K562 (cell line): ENCODE measurements at regions of chr22 and their contacts with region 1.

Region 1: GRCh38 chr22:39997939-39998338 is 3.2 kb downstream of the FAM83F start:
- DNase-seq: no peak
- ATAC-seq: no peak
- H3K4me3 ChIP-seq: no peak overlapping the region
- H3K27ac ChIP-seq: no peak overlapping the region
- H3K4me1 ChIP-seq: peaks cover 48 to 61% of the 10 kb centered on the region in 2 experiments
- H3K27me3 ChIP-seq: no peaks in the 10 kb centered on the region
- CTCF ChIP-seq: no peak
- EP300 ChIP-seq: no peak
- POLR2A ChIP-seq: no peak
- RAD21 ChIP-seq: no peak

Region 2: DNA sequence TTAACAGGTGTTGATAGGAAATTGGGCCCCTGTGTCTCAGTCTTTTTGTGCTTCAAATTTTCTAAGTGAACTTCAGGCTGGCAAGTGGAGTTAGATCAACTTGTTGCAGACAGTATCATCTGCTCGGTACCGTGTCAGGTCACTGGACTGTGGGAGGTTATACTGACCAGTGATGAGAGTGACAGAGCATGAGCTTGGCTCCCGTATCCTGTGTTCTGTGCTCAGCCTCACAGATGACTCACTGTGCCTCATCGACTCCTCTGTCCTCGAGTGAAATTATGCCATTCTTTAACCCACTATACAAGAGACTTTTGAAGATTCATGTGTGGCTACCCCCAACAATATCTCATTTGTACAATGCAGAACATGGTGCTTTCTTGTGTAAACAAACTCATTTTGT is 89.2 kb before region 1 on chr22:
- CTCF ChIA-PET with region 1: no interaction called
- POLR2A ChIA-PET with region 1: no interaction called
- in situ Hi-C with region 1: no loop called
- intact Hi-C with region 1: no loop called
- DNase-seq: peak; percentile 22 to 73 (median 31)
- ATAC-seq: peak; percentile 81
- H3K4me3 ChIP-seq: no peak overlapping the region
- H3K27ac ChIP-seq: peak overlapping the region; percentile 46; the same call in 1 of the 3 replicates
- H3K4me1 ChIP-seq: peaks cover 0 to 18% of the 10 kb centered on the region in 2 experiments
- H3K27me3 ChIP-seq: no peaks in the 10 kb centered on the region
- CTCF ChIP-seq: no peak
- EP300 ChIP-seq: no peak
- POLR2A ChIP-seq: no peak
- RAD21 ChIP-seq: no peak

Region 3: GRCh38 chr22:39932918-39933649 is 64.9 kb before region 1 on chr22:
- CTCF ChIA-PET with region 1: no interaction called
- POLR2A ChIA-PET with region 1: no interaction called
- in situ Hi-C with region 1: no loop called
- intact Hi-C with region 1: loop called (anchors 5 kb)
- DNase-seq: peak; percentile 69 to 82 (median 72)
- ATAC-seq: peak; percentile 83
- H3K4me3 ChIP-seq: no peak overlapping the region
- H3K27ac ChIP-seq: no peak overlapping the region
- H3K4me1 ChIP-seq: peaks cover 4 to 57% of the 10 kb centered on the region in 2 experiments; a peak in 4 of 5 replicates
- H3K27me3 ChIP-seq: no peaks in the 10 kb centered on the region
- CTCF ChIP-seq: peak; percentile 70 to 78 (median 71)
- EP300 ChIP-seq: no peak
- POLR2A ChIP-seq: no peak
- RAD21 ChIP-seq: peak; percentile 32 to 71; a peak in 3 of 4 replicates

Region 4: DNA sequence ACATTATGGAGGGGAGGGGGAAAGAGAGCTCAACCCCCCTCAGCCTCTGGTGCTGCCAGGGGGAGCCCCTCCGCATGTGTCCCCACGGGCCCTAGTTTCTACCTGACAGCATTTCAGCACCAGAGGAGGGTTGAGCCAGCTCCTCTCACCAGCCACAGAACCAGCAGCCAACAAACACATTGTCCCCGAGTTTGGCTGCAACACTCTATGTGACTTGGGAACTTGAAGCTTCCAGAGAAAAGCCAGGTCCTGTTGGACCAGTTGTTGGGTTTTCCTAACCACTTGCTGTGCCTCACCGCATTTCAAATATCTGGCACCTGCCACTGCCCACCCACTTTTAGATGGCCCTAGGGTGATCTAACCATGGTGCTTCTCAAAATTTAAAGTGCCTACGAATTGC is 24.3 kb before region 1 on chr22:
- CTCF ChIA-PET with region 1: no interaction called
- POLR2A ChIA-PET with region 1: interaction called, 10 read pairs
- in situ Hi-C with region 1: no loop called
- intact Hi-C with region 1: no loop called
- DNase-seq: no peak
- ATAC-seq: no peak; the same call in 2 of the 3 replicates
- H3K4me3 ChIP-seq: no peak overlapping the region
- H3K27ac ChIP-seq: no peak overlapping the region
- H3K4me1 ChIP-seq: peaks cover 0 to 2% of the 10 kb centered on the region in 2 experiments; a peak in 1 of 5 replicates
- H3K27me3 ChIP-seq: no peaks in the 10 kb centered on the region
- CTCF ChIP-seq: no peak
- EP300 ChIP-seq: no peak
- POLR2A ChIP-seq: no peak
- RAD21 ChIP-seq: no peak

Region 5: GRCh38 chr22:40076702-40077645 is 79.0 kb after region 1 on chr22:
- CTCF ChIA-PET with region 1: no interaction called
- POLR2A ChIA-PET with region 1: no interaction called
- in situ Hi-C with region 1: no loop called
- intact Hi-C with region 1: no loop called
- DNase-seq: peak in 2 of 4 experiments; percentile 20 to 45
- ATAC-seq: peak; percentile 80
- H3K4me3 ChIP-seq: no peak overlapping the region
- H3K27ac ChIP-seq: peak overlapping the region; percentile 68
- H3K4me1 ChIP-seq: peaks cover 12 to 16% of the 10 kb centered on the region in 2 experiments
- H3K27me3 ChIP-seq: no peaks in the 10 kb centered on the region
- CTCF ChIP-seq: no peak
- EP300 ChIP-seq: no peak
- POLR2A ChIP-seq: no peak
- RAD21 ChIP-seq: no peak